ENCODE measurements at regions of chr2 and their contacts with region 1.

Region 1: GRCh38 chr2:7427293-7428060 is 510.3 kb downstream of the RNF144A start:
- DNase-seq: no peak
- H3K4me3 ChIP-seq: no peak overlapping the region
- H3K27ac ChIP-seq: no peak overlapping the region
- H3K27me3 ChIP-seq: peaks cover 0 to 12% (median 0%) of the 10 kb centered on the region in 45 donors
- CTCF ChIP-seq: peak; percentile 58 to 90 (median 78)

Region 2: DNA sequence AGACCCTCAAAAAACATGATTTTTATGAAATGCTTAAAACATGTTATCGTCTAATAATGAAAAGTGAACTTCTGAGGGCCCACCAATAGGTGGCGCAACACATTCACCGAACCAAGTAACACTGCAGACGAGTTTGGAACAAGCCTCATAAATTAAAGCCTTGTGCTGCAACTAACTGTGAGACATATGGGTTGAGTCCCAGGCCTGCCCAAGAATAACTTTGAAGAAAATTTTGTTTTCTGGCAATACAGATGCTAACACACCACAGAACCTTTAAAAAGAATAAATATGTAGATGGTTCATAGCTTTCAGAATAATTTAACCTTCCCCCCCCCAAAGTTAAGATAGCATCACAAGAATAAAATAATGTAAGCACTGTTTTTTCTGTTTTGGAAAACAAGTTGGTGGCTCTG is 224.4 kb before region 1 on chr2:
- intact Hi-C with region 1: loop called in 1 of 2 experiments (anchors 10 kb)
- DNase-seq: peak in 7 of 10 donors; percentile 49 to 79 (median 61)
- H3K4me3 ChIP-seq: no peak overlapping the region
- H3K27ac ChIP-seq: peak overlapping the region in 9 of 59 donors; percentile 6 to 53 (median 31)
- H3K27me3 ChIP-seq: no peaks in the 10 kb centered on the region
- CTCF ChIP-seq: peak; percentile 75 to 99 (median 90)

Region 3: DNA sequence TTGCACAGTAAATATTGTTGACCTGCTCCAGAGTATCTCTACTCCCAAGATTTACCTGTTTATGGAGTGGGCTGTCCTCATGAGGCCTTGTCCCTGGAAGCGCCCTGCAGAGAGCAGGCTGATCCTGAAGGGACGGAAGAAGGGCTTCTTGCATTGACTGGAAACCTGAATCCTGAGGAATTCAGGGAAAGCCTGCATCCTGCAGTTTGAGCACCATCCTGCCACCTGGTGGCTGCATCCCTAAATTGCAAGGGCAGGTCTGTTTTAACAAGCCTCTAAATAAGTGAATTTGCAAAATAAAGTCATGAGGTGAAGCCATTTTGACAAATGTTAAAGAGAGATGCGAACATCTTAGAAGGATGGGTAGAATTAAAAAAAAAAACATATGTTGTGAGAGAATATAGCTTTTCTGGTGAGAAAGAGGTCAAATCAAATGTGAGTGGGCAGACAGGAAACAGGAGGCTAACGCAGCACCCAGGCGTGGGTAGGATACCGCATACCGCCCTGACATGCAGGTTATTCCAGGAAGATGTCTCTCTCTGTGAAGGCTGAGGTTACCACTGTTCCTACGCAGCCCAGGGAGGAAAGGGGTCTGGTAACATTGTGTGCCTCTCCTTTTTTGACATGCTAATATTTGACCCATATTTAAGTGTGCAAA is 244.7 kb after region 1 on chr2:
- intact Hi-C with region 1: loop called in 1 of 2 experiments (anchors 10 kb)
- DNase-seq: no peak
- H3K4me3 ChIP-seq: no peak overlapping the region
- H3K27ac ChIP-seq: peak overlapping the region in 3 of 59 donors; percentile 0 to 24 (median 9)
- H3K27me3 ChIP-seq: peaks cover 0 to 4% (median 0%) of the 10 kb centered on the region in 45 donors
- CTCF ChIP-seq: peak in 52 of 56 donors; percentile 15 to 62 (median 45)

Region 4: GRCh38 chr2:8285081-8285480 is 857.6 kb after region 1 on chr2:
- intact Hi-C with region 1: loop called in 1 of 2 experiments (anchors 10 kb)
- DNase-seq: no peak
- H3K4me3 ChIP-seq: no peak overlapping the region
- H3K27ac ChIP-seq: no peak overlapping the region
- H3K27me3 ChIP-seq: peaks cover 0 to 3% (median 0%) of the 10 kb centered on the region in 45 donors
- CTCF ChIP-seq: peak in 39 of 56 donors; percentile 14 to 55 (median 26)

Region 5: GRCh38 chr2:8761529-8762164 is 1334.2 kb after region 1 on chr2:
- intact Hi-C with region 1: loop called in 1 of 2 experiments (anchors 10 kb)
- DNase-seq: no peak
- H3K4me3 ChIP-seq: no peak overlapping the region
- H3K27ac ChIP-seq: no peak overlapping the region
- H3K27me3 ChIP-seq: no peaks in the 10 kb centered on the region
- CTCF ChIP-seq: peak; percentile 39 to 89 (median 69)